Transverse colon (tissue), 4 donors: ENCODE measurements at regions of chr1 and their contacts with region 1.

Region 1: GRCh38 chr1:9292361-9293240 is at the start of gene SPSB1:
- DNase-seq: peak; percentile 88
- H3K4me3 ChIP-seq: peak within 1 kb of the TSS; percentile 59 to 99 (median 82)
- H3K27ac ChIP-seq: peak within 1 kb of the TSS; percentile 94 to 96 (median 96)
- H3K4me1 ChIP-seq: peaks cover 20 to 44% (median 30%) of the 10 kb centered on the region in 4 donors
- H3K27me3 ChIP-seq: no peaks in the 10 kb centered on the region
- CTCF ChIP-seq: peak in 2 of 5 experiments; percentile 8 to 16
- EP300 ChIP-seq: no peak
- POLR2A ChIP-seq: peak; percentile 73
- total RNA-seq, gene SPSB1: 40.0 to 82.1 (median 52.6) TPM

Region 2: GRCh38 chr1:9371391-9371935 is 78.9 kb after region 1 on chr1:
- in situ Hi-C with region 1: no loop called
- intact Hi-C with region 1: loop called (anchors 10 kb)
- DNase-seq: peak; percentile 54
- H3K4me3 ChIP-seq: no peak overlapping the region
- H3K27ac ChIP-seq: peak overlapping the region; percentile 87 to 91 (median 88)
- H3K4me1 ChIP-seq: peaks cover 44 to 56% (median 50%) of the 10 kb centered on the region in 4 donors
- H3K27me3 ChIP-seq: no peaks in the 10 kb centered on the region
- CTCF ChIP-seq: no peak
- EP300 ChIP-seq: no peak
- POLR2A ChIP-seq: peak; percentile 14

Region 3: GRCh38 chr1:9455487-9456234 is 163.1 kb after region 1 on chr1:
- in situ Hi-C with region 1: loop called in 3 of 4 experiments (anchors 10 to 25 kb)
- intact Hi-C with region 1: loop called (anchors 5 kb)
- DNase-seq: peak; percentile 72
- H3K4me3 ChIP-seq: no peak overlapping the region
- H3K27ac ChIP-seq: no peak overlapping the region
- H3K4me1 ChIP-seq: peaks cover 0 to 3% (median 2%) of the 10 kb centered on the region in 4 donors
- H3K27me3 ChIP-seq: no peaks in the 10 kb centered on the region
- CTCF ChIP-seq: peak; percentile 75 to 90 (median 84)
- EP300 ChIP-seq: no peak
- POLR2A ChIP-seq: no peak

Region 4: DNA sequence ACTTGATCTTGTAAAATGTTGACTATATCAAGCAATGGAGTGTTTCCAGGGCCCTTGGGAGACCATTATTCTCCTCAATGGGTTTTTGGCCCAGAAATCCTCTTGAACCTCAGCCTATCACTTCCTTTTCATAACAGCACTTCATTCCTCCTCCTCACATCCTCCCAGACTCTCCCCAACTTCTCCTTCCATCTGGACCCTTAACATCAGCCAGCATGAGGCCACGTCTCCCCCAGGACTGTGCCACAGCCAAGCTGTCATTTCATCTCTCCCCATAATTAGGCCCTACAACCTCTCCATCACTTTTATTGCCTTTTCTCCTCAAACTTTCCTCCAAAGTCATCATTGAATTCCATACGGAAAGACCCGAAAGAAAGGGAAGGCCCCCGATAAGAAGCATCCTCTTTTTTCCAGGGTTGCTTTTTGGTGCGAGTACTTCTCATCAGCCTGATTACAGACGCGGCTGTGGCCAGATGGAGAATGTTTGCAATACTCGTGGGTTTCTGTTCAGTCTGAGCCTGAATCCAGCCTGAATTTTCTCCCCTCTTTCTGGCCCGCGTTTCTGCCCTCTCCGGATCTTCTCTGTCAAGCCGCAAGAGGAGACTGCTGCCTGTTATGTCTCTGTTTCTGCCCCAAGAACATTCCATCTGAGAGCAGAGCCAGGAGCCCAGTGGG is 194.0 kb after region 1 on chr1:
- in situ Hi-C with region 1: loop called in 2 of 4 experiments (anchors 10 kb)
- intact Hi-C with region 1: loop called (anchors 2 kb)
- DNase-seq: no peak
- H3K4me3 ChIP-seq: no peak overlapping the region
- H3K27ac ChIP-seq: no peak overlapping the region
- H3K4me1 ChIP-seq: peaks cover 0 to 5% (median 1%) of the 10 kb centered on the region in 4 donors
- H3K27me3 ChIP-seq: no peaks in the 10 kb centered on the region
- CTCF ChIP-seq: no peak
- EP300 ChIP-seq: no peak
- POLR2A ChIP-seq: no peak

Region 5: DNA sequence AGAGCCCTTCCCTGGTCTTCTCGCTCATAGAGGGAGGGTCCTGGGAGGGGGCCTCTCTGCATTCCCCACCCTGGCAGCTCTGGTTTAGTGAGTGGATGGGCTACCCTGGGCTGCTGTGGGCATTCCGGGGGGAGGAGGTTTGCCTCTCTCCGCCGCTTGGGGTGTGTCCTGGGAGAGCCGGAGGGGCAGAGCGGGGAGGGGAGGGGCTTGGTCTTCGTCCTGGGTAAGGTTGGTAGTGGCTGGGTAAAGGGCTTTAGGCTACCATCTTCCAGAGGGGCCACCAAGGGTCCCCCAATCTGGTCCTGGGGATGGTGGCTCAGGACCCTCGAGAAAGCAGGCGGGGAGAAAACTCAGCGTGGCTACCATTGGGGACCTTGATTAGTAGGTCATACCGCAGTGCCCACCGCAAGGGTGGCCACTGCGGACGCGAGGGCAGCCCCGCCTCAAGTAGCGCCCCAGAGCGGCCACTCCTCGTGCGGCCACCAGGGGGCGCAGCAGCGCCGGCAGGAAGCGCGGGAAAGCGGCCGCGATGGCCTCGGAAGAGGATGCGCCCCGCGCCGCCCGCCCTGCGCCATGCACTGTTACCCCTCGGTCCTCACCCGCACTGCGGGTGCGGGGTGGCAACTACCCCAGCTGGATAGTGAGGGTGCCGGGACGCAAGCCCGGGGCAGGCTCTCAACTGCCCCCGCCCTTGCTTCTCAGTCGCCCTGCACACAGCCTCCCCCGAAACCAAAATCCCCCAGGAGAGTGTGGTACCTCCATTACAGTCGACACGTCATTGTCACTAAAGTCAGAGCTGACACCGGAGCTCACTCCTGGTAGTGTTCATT is 202.5 kb after region 1 on chr1:
- in situ Hi-C with region 1: loop called in 1 of 4 experiments (anchors 10 kb)
- intact Hi-C with region 1: loop called (anchors 2 kb)
- DNase-seq: peak; percentile 58
- H3K4me3 ChIP-seq: peak overlapping the region in 1 of 4 donors; percentile 35
- H3K27ac ChIP-seq: no peak overlapping the region
- H3K4me1 ChIP-seq: peaks cover 3 to 13% (median 6%) of the 10 kb centered on the region in 4 donors
- H3K27me3 ChIP-seq: no peaks in the 10 kb centered on the region
- CTCF ChIP-seq: peak; percentile 90 to 99 (median 99)
- EP300 ChIP-seq: no peak
- POLR2A ChIP-seq: no peak